Ovary (tissue), 10 donors: ENCODE measurements at regions of chr1 and their contacts with region 1.

Region 1: GRCh38 chr1:202184750-202185460 is 8.7 kb upstream of the LGR6 start:
- DNase-seq: peak; percentile 70 to 88 (median 80)
- H3K4me3 ChIP-seq: no peak overlapping the region
- H3K27ac ChIP-seq: no peak overlapping the region
- H3K4me1 ChIP-seq: no peaks in the 10 kb centered on the region
- H3K27me3 ChIP-seq: no peaks in the 10 kb centered on the region
- CTCF ChIP-seq: peak in 2 of 3 donors; percentile 44 to 48
- EP300 ChIP-seq: no peak
- POLR2A ChIP-seq: no peak

Region 2: DNA sequence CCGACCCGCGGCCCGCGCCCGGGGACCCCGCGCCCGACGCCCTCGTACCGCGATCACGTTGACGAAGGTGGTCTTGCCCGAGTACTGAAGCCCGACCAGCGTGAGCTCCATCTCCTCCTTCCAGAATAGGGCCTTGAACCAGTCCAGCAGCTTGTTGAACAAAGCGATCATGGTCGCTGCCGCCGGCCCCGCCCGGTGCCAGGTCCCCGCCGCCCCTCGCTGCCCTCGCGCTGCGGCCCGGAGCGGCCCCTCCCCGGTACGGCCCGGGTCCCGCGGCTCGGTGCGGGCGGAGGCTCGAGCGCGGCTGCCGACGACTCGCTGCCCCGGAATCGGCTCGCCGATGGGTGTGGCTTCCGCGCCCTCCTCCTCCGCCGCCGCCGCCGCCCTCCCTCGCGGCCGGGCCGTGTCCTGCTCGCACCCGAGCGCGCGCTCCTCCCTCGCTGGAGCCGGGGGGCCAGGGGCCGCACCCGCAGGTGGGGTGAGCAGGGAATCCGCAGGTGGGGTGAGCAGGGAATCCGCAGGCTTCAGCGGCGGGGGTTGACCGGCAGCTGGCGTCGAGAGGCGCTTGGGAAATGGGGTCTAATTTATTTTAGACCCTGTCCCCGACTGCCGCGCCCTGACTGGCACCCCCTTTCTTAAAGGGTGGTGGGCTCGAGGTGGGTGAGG is 40.4 kb before region 1 on chr1 and contains the start of gene ARL8A:
- intact Hi-C with region 1: no loop called
- DNase-seq: peak; percentile 72 to 84 (median 78)
- H3K4me3 ChIP-seq: peak within 1 kb of the TSS; percentile 71
- H3K27ac ChIP-seq: peak within 1 kb of the TSS; percentile 87 to 92
- H3K4me1 ChIP-seq: peaks cover 6% of the 10 kb centered on the region
- H3K27me3 ChIP-seq: no peaks in the 10 kb centered on the region
- CTCF ChIP-seq: no peak
- EP300 ChIP-seq: no peak
- POLR2A ChIP-seq: peak; percentile 70
- total RNA-seq, gene ARL8A: 20.0 to 95.9 (median 67.6) TPM

Region 3: DNA sequence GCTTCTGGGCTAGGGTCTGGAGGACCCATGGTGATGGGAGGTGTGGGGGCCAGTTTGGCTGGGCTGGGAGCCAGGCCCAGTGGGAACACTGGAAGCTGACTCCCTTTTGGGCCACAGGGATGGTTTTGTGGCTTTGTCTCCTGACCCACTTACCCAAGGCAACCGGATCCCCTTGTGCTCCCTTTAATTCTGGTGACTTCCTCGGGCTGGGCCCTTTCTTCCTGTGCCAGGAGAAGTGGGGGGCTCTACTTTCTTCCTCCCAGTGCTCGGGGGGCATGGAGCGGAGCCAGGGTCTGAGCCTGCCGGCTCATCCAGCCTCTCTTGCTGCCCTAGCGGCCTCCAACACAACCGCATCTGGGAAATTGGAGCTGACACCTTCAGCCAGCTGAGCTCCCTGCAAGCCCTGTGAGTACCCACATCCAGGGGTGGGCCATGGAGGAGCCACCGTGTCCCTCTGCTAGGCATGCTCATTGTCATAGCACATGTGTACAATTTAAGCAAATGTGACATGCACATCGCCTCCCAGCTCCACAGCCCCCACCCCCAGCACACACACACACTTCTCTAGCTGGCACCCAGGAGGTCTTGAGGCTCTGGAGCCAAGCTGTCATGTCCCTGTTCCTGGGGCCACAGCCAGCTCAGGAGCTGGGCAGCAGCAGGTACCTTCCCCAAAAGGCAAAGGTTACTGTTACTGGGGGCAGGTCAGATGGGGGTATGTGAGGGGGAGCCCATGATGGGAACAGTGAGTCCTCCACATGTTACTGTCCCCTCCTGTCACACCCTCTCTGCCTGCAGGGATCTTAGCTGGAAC is 121.8 kb after region 1 on chr1:
- intact Hi-C with region 1: loop called in 2 of 4 experiments (anchors 5 to 10 kb)
- DNase-seq: no peak
- H3K4me3 ChIP-seq: no peak overlapping the region
- H3K27ac ChIP-seq: no peak overlapping the region
- H3K4me1 ChIP-seq: no peaks in the 10 kb centered on the region
- H3K27me3 ChIP-seq: no peaks in the 10 kb centered on the region
- CTCF ChIP-seq: no peak
- EP300 ChIP-seq: no peak
- POLR2A ChIP-seq: no peak

Region 4: DNA sequence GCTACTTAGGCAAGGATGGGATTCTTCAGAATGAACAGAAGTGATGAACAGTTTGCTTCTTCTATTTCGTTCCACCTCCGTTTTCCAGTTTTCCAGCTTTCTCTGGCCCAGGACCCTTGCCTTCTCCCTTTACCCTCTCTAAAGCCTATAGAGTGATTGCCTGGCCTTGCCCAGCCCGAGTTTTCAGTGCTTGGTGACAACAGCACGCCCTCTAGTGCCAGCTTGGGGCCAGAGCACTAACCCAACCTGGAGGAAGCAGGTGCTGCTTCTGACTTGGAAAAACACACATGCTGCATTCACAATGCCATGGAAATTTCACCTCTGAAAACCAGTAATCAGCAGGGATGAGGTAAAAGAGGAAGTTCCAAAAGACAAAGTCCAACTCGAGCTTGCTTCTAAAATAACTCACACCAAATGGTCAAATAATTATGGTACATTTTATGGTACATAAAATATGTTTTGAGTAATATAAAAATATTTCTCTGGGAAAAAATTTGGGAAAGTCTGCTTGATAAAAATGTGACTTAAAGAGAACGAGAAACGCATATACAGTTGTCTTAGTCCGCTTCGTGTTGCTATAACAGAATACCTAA is 130.8 kb after region 1 on chr1:
- intact Hi-C with region 1: loop called in 2 of 4 experiments (anchors 2 to 10 kb)
- DNase-seq: peak; percentile 51 to 81 (median 65)
- H3K4me3 ChIP-seq: no peak overlapping the region
- H3K27ac ChIP-seq: no peak overlapping the region
- H3K4me1 ChIP-seq: no peaks in the 10 kb centered on the region
- H3K27me3 ChIP-seq: no peaks in the 10 kb centered on the region
- CTCF ChIP-seq: peak; percentile 28 to 63 (median 58)
- EP300 ChIP-seq: no peak
- POLR2A ChIP-seq: no peak

Region 5: DNA sequence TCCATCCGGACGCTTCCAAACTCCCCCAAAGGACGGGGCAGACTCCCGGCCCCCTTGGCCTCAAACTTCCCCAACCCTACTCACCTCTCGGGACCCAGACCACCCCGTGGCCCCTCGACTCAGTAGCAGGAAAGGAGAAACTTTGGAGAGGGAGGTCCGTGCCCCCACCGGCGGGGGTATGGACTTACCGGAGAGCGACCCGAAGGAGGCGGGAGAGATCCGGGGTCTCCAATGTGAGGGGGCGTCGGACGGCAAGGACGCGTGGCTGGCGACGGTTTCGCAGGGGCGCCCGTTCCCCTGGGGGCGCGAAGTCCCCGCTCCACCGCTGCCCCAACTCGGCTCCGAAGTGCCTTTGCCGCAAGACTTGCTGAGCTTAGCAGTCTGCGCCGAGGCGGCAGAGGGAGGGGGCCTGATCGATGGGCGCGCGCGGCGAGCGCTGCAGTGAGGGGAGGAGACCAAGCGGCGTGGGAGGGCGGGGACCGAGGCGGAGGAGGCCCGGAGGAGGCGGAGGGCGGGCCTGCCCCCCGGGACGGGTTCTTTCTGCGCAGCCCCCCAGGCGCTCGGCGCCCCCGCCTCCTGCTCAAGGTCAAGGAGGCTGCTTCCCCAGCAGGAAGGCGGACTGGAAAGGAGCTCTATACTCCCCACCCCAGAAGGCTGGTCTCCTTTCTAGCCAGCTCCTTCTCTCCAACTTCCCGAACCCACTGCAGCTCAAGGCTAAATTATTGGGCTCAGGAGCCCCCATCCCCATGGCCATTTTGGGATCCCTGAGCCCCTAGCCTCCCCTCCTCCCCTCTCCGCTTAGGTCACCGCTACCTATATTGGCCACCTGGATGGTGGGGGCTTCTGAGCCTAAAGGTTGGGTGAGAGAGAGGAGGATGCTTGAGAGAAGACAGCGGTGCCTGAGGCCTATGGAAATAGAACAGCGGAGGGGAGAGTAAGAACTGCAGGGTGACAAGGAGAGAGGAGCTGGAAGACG is 525.5 kb after region 1 on chr1 and contains the start of gene SYT2:
- intact Hi-C with region 1: loop called in 2 of 4 experiments (anchors 5 to 10 kb)
- DNase-seq: peak; percentile 64 to 87 (median 80)
- H3K4me3 ChIP-seq: peak within 1 kb of the TSS; percentile 29
- H3K27ac ChIP-seq: no peak within 1 kb of the TSS
- H3K4me1 ChIP-seq: no peaks in the 10 kb centered on the region
- H3K27me3 ChIP-seq: no peaks in the 10 kb centered on the region
- CTCF ChIP-seq: no peak
- EP300 ChIP-seq: no peak
- POLR2A ChIP-seq: no peak
- total RNA-seq, gene SYT2: 0.34 to 5.5 (median 0.80) TPM in 6 of 7 donors, not detected in the other

Region 6: GRCh38 chr1:202716654-202717053 is 531.7 kb after region 1 on chr1:
- intact Hi-C with region 1: loop called in 2 of 4 experiments (anchors 5 to 10 kb)
- DNase-seq: no peak
- H3K4me3 ChIP-seq: no peak overlapping the region
- H3K27ac ChIP-seq: no peak overlapping the region
- H3K4me1 ChIP-seq: no peaks in the 10 kb centered on the region
- H3K27me3 ChIP-seq: no peaks in the 10 kb centered on the region
- CTCF ChIP-seq: no peak
- EP300 ChIP-seq: no peak
- POLR2A ChIP-seq: no peak